K562 (cell line): ENCODE measurements at regions of chr6 and their contacts with region 1.

Region 1: GRCh38 chr6:22025468-22026160 is 271.2 kb downstream of the PRL start:
- DNase-seq: peak; percentile 78 to 97 (median 84)
- ATAC-seq: peak; percentile 83
- H3K4me3 ChIP-seq: peak overlapping the region; percentile 28; the same call in 1 of the 2 replicates
- H3K27ac ChIP-seq: peak overlapping the region; percentile 96
- H3K4me1 ChIP-seq: peaks cover 18 to 48% of the 10 kb centered on the region in 2 experiments
- H3K27me3 ChIP-seq: no peaks in the 10 kb centered on the region
- CTCF ChIP-seq: no peak
- EP300 ChIP-seq: peak; percentile 88
- POLR2A ChIP-seq: peak; percentile 74
- RAD21 ChIP-seq: 0 out of 4 replicates have a peak, but pooled peaks of 1 of the 2 experiments have one; percentile 26

Region 2: GRCh38 chr6:21987501-21987957 is 38.1 kb before region 1 on chr6:
- CTCF ChIA-PET with region 1: no interaction called
- POLR2A ChIA-PET with region 1: interaction called, 4 read pairs
- in situ Hi-C with region 1: no loop called
- intact Hi-C with region 1: loop called (anchors 5 kb)
- DNase-seq: peak; percentile 35 to 85 (median 58)
- ATAC-seq: peak; percentile 84
- H3K4me3 ChIP-seq: no peak overlapping the region
- H3K27ac ChIP-seq: peak overlapping the region; percentile 63
- H3K4me1 ChIP-seq: peaks cover 0 to 27% of the 10 kb centered on the region in 2 experiments; a peak in 4 of 5 replicates
- H3K27me3 ChIP-seq: no peaks in the 10 kb centered on the region
- CTCF ChIP-seq: no peak
- EP300 ChIP-seq: peak; percentile 67
- POLR2A ChIP-seq: no peak
- RAD21 ChIP-seq: 0 out of 4 replicates have a peak, but pooled peaks of 1 of the 2 experiments have one; percentile 12

Region 3: DNA sequence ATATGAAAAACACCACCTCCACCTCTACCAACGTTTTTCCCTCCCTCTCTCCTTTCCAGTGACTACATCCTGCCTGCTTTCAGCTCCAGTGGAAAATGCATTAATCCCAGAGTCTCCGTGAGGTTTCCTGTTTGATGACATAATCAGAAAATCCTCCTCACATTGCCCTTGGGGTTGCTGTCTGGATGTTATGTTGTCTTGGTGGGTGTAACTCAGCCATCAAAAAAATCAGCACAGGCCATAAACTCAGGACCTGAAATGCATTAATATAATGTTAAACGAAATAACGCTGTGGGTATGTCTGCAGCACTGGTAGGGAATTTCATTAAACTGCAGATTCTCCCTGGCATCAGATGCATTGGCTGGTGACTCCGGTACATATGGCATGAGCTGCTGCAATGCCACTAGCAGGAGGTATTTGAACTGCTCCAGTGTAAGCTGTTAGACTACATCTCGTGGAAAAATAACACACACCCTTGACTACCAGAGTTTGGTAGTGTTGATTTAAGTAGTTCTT is 26.5 kb before region 1 on chr6:
- CTCF ChIA-PET with region 1: no interaction called
- POLR2A ChIA-PET with region 1: interaction called, 5 read pairs
- in situ Hi-C with region 1: no loop called
- intact Hi-C with region 1: loop called (anchors 2 kb)
- DNase-seq: no peak
- ATAC-seq: no peak
- H3K4me3 ChIP-seq: no peak overlapping the region
- H3K27ac ChIP-seq: no peak overlapping the region
- H3K4me1 ChIP-seq: peaks cover 0 to 43% of the 10 kb centered on the region in 2 experiments; a peak in 3 of 5 replicates
- H3K27me3 ChIP-seq: no peaks in the 10 kb centered on the region
- CTCF ChIP-seq: no peak
- EP300 ChIP-seq: no peak
- POLR2A ChIP-seq: no peak
- RAD21 ChIP-seq: no peak

Region 4: DNA sequence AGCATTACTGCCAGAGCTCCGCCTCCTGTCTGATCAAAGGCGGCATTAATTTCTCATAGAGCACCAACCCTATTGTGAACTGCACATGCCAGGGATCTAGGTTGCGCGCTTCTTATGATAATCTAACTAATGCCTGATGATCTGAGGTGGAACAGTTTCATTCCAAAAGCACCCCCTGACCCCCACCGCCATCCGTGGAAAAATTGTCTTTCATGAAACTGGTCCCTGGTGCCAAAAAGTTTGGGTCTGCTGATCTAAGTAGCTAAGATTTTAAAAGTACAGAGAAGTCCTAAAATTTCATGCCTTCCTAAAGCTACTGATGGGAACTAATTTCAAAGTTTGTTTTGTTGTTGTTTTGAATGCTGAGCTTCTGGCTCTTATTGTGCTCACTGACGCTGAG is 10.4 kb before region 1 on chr6:
- CTCF ChIA-PET with region 1: no interaction called
- POLR2A ChIA-PET with region 1: interaction called, 12 read pairs
- in situ Hi-C with region 1: no loop called
- intact Hi-C with region 1: no loop called
- DNase-seq: no peak
- ATAC-seq: no peak
- H3K4me3 ChIP-seq: no peak overlapping the region
- H3K27ac ChIP-seq: no peak overlapping the region
- H3K4me1 ChIP-seq: peaks cover 0 to 3% of the 10 kb centered on the region in 2 experiments; a peak in 2 of 5 replicates
- H3K27me3 ChIP-seq: no peaks in the 10 kb centered on the region
- CTCF ChIP-seq: no peak
- EP300 ChIP-seq: no peak
- POLR2A ChIP-seq: no peak
- RAD21 ChIP-seq: no peak

Region 5: DNA sequence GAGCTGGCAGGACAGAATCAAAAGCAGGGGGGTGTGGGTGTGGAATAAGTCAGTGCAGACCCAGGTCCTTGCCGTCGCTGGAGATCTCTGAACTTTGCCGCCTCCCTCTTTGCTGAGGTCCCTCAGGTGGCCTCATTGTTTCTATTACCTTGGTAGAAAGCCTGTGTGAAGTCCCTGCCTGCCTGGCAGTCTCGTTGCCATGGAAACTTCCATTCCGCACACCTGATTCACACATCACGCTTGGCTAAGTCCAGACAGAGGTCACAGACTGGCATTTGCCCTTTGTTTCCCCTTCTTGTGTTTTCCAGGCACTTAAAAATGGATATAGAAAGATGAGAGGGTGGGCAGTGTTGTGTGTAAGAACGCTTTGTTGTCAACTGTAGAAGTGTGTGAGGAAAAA is 10.7 kb after region 1 on chr6:
- CTCF ChIA-PET with region 1: no interaction called
- POLR2A ChIA-PET with region 1: interaction called, 10 read pairs
- in situ Hi-C with region 1: no loop called
- intact Hi-C with region 1: no loop called
- DNase-seq: peak in 1 of 4 experiments; percentile 26
- ATAC-seq: peak; percentile 51
- H3K4me3 ChIP-seq: no peak overlapping the region
- H3K27ac ChIP-seq: no peak overlapping the region
- H3K4me1 ChIP-seq: peaks cover 7 to 13% of the 10 kb centered on the region in 2 experiments; a peak in 4 of 5 replicates
- H3K27me3 ChIP-seq: no peaks in the 10 kb centered on the region
- CTCF ChIP-seq: no peak
- EP300 ChIP-seq: no peak
- POLR2A ChIP-seq: no peak
- RAD21 ChIP-seq: no peak

Region 6: GRCh38 chr6:22699151-22699550 is 673.5 kb after region 1 on chr6:
- CTCF ChIA-PET with region 1: no interaction called
- POLR2A ChIA-PET with region 1: no interaction called
- in situ Hi-C with region 1: no loop called
- intact Hi-C with region 1: no loop called
- DNase-seq: no peak
- ATAC-seq: no peak
- H3K4me3 ChIP-seq: no peak overlapping the region
- H3K27ac ChIP-seq: no peak overlapping the region
- H3K4me1 ChIP-seq: no peaks in the 10 kb centered on the region
- H3K27me3 ChIP-seq: no peaks in the 10 kb centered on the region
- CTCF ChIP-seq: no peak
- EP300 ChIP-seq: no peak
- POLR2A ChIP-seq: no peak
- RAD21 ChIP-seq: no peak